Activated CD4-positive, alpha-beta memory T cell treated with anti-CD3 and anti-CD28 coated beads for 36 hours (primary cell): ENCODE measurements at regions of chr15 and their contacts with region 1.

Region 1: GRCh38 chr15:49620658-49621368 is at the starts of genes DTWD1 and FAM227B:
- DNase-seq: peak; percentile 96
- H3K4me3 Mint-ChIP-seq: peak within 1 kb of the TSS; percentile 94
- H3K27ac Mint-ChIP-seq: peak within 1 kb of the TSS; percentile 92
- H3K4me1 Mint-ChIP-seq: peaks cover 32% of the 10 kb centered on the region
- H3K27me3 Mint-ChIP-seq: no peaks in the 10 kb centered on the region
- total RNA-seq, gene DTWD1: 14.3 to 18.5 TPM
- total RNA-seq, gene FAM227B: 2.8 to 3.8 TPM

Region 2: GRCh38 chr15:48810414-48811317 is 810.1 kb before region 1 on chr15 and contains the start of gene CEP152:
- CTCF ChIA-PET with region 1: no interaction called
- POLR2A ChIA-PET with region 1: interaction called, 6 read pairs
- intact Hi-C with region 1: loop called (anchors 1 kb)
- DNase-seq: peak; percentile 99
- H3K4me3 Mint-ChIP-seq: peak within 1 kb of the TSS; percentile 96
- H3K27ac Mint-ChIP-seq: peak within 1 kb of the TSS; percentile 95
- H3K4me1 Mint-ChIP-seq: peaks cover 36% of the 10 kb centered on the region
- H3K27me3 Mint-ChIP-seq: peaks cover 1% of the 10 kb centered on the region
- total RNA-seq, gene CEP152: 36.1 to 39.4 TPM

Region 3: GRCh38 chr15:49169880-49170597 is 450.8 kb before region 1 on chr15 and contains the start of gene GALK2:
- CTCF ChIA-PET with region 1: no interaction called
- POLR2A ChIA-PET with region 1: no interaction called
- intact Hi-C with region 1: loop called (anchors 5 kb)
- DNase-seq: peak; percentile 92
- H3K4me3 Mint-ChIP-seq: peak within 1 kb of the TSS; percentile 87
- H3K27ac Mint-ChIP-seq: peak within 1 kb of the TSS; percentile 88
- H3K4me1 Mint-ChIP-seq: peaks cover 30% of the 10 kb centered on the region
- H3K27me3 Mint-ChIP-seq: no peaks in the 10 kb centered on the region
- total RNA-seq, gene GALK2: 31.1 to 33.1 TPM

Region 4: DNA sequence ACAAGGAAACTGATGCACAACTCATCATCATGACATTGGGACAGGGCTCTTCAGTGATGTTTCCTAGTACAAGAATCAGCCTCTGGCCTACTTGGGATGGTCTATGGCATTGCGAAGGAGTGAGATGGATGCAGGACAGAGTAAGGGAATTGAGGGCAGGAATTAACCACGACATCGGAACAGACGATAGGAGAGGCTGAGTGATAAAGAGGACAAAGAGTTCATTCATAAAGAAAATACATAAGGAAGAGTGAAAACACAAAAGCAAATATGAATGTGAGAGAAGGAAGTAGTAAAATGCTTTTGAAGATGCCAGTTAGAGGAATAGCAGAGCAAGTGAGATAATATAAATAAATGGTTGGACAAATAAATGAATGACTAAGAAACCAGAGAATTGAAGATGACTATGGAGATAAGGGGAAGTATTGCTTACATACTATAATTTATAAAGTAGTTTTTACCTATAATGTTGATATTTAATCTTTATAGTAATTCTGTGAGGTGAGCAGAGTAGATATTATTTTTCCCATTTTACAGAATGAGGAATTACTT is 203.2 kb after region 1 on chr15:
- CTCF ChIA-PET with region 1: no interaction called
- POLR2A ChIA-PET with region 1: no interaction called
- intact Hi-C with region 1: no loop called
- DNase-seq: no peak
- H3K4me3 Mint-ChIP-seq: no peak overlapping the region
- H3K27ac Mint-ChIP-seq: no peak overlapping the region
- H3K4me1 Mint-ChIP-seq: no peaks in the 10 kb centered on the region
- H3K27me3 Mint-ChIP-seq: no peaks in the 10 kb centered on the region